ENCODE measurements at regions of chr11 and their contacts with region 1.

Region 1: GRCh38 chr11:33808228-33808828 is 34.0 kb upstream of the FBXO3 start:
- DNase-seq: peak; percentile 91
- ATAC-seq: peak; percentile 90
- H3K4me3 Mint-ChIP-seq: no peak overlapping the region
- H3K27ac Mint-ChIP-seq: no peak overlapping the region
- H3K4me1 Mint-ChIP-seq: no peaks in the 10 kb centered on the region
- H3K27me3 Mint-ChIP-seq: peaks cover 6% of the 10 kb centered on the region

Region 2: GRCh38 chr11:33790040-33790439 is 18.3 kb before region 1 on chr11:
- CTCF ChIA-PET with region 1: interaction called, 27 read pairs
- POLR2A ChIA-PET with region 1: no interaction called
- intact Hi-C with region 1: no loop called
- DNase-seq: no peak
- ATAC-seq: no peak
- H3K4me3 Mint-ChIP-seq: no peak overlapping the region
- H3K27ac Mint-ChIP-seq: no peak overlapping the region
- H3K4me1 Mint-ChIP-seq: no peaks in the 10 kb centered on the region
- H3K27me3 Mint-ChIP-seq: peaks cover 32% of the 10 kb centered on the region

Region 3: GRCh38 chr11:33957304-33957917 is 149.1 kb after region 1 on chr11:
- CTCF ChIA-PET with region 1: no interaction called
- POLR2A ChIA-PET with region 1: no interaction called
- intact Hi-C with region 1: no loop called
- DNase-seq: no peak
- ATAC-seq: no peak
- H3K4me3 Mint-ChIP-seq: no peak overlapping the region
- H3K27ac Mint-ChIP-seq: no peak overlapping the region
- H3K4me1 Mint-ChIP-seq: no peaks in the 10 kb centered on the region
- H3K27me3 Mint-ChIP-seq: peaks cover 19% of the 10 kb centered on the region

Region 4: GRCh38 chr11:33970984-33971466 is 162.7 kb after region 1 on chr11:
- CTCF ChIA-PET with region 1: interaction called, 7 read pairs
- POLR2A ChIA-PET with region 1: no interaction called
- intact Hi-C with region 1: loop called in 1 of 2 experiments (anchors 2 kb)
- DNase-seq: peak; percentile 40
- ATAC-seq: peak; percentile 44
- H3K4me3 Mint-ChIP-seq: no peak overlapping the region
- H3K27ac Mint-ChIP-seq: no peak overlapping the region
- H3K4me1 Mint-ChIP-seq: no peaks in the 10 kb centered on the region
- H3K27me3 Mint-ChIP-seq: peaks cover 9% of the 10 kb centered on the region